Activated CD4-positive, alpha-beta T cell treated with anti-CD3 and anti-CD28 coated beads for 36 hours (primary cell): ENCODE measurements at regions of chr21 and their contacts with region 1.

Region 1: DNA sequence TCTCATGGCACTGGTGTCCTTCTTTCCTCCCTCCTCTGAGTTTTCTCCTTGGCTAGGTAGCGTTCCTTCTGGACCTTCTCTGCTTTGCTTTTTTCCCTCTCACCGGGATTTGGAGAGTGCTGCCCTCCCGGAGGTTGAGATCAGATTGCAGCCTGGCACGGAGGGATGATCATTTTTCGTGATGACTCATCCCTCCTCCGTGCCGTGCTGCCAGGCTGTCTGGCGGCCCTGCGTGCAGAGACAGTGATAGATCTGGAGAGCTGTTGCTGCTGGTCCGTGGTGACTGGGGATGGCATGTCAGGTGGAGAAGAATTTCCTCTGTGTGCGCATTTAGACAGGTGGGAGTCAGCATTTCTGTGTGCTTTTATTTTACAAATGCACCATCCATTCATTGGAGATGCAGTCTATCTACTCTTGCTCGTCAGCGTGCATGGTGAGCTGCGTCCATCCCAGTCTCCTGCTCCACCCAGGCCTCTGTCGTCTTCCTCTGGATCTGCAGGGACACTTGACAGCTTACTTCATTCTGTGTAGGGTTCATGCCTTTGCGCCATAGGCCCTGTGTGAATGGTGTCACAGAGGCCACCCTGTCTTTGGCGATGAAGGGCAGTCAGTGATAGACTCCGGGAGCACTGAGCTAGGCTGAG is 104.4 kb downstream of the PCBP3 start:
- DNase-seq: peak; percentile 40
- ATAC-seq: peak; percentile 61
- H3K4me3 Mint-ChIP-seq: no peak overlapping the region
- H3K27ac Mint-ChIP-seq: no peak overlapping the region
- H3K4me1 Mint-ChIP-seq: peaks cover 11% of the 10 kb centered on the region
- H3K27me3 Mint-ChIP-seq: no peaks in the 10 kb centered on the region

Region 2: DNA sequence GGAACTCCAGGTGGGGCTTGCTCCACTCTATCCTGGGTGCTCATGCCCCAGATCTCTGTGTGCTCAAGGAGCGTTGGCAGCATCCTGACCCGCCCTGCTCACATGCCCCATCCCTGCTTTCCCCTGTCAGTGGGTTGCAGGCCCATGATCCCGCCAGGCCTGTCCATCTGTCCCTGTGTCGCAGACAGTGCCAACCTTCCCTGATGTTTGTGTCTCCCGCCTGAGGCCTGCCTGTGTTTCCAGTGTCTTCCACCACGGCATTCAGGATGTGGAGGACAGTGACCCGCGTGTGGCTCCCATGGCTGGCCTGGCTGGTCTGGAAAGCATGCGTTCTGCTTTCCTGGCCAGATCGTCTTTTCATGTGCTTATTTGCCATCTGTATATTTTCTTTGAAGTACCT is 21.5 kb before region 1 on chr21:
- CTCF ChIA-PET with region 1: interaction called, 6 read pairs
- POLR2A ChIA-PET with region 1: no interaction called
- intact Hi-C with region 1: loop called in 1 of 2 experiments (anchors 2 kb)
- DNase-seq: no peak
- ATAC-seq: no peak
- H3K4me3 Mint-ChIP-seq: no peak overlapping the region
- H3K27ac Mint-ChIP-seq: no peak overlapping the region
- H3K4me1 Mint-ChIP-seq: peaks cover 17% of the 10 kb centered on the region
- H3K27me3 Mint-ChIP-seq: no peaks in the 10 kb centered on the region

Region 3: GRCh38 chr21:45865106-45865832 is 117.3 kb after region 1 on chr21:
- CTCF ChIA-PET with region 1: no interaction called
- POLR2A ChIA-PET with region 1: no interaction called
- intact Hi-C with region 1: no loop called
- DNase-seq: no peak
- ATAC-seq: no peak
- H3K4me3 Mint-ChIP-seq: no peak overlapping the region
- H3K27ac Mint-ChIP-seq: no peak overlapping the region
- H3K4me1 Mint-ChIP-seq: no peaks in the 10 kb centered on the region
- H3K27me3 Mint-ChIP-seq: no peaks in the 10 kb centered on the region